ENCODE measurements at regions of chr11 and their contacts with region 1.

Region 1: DNA sequence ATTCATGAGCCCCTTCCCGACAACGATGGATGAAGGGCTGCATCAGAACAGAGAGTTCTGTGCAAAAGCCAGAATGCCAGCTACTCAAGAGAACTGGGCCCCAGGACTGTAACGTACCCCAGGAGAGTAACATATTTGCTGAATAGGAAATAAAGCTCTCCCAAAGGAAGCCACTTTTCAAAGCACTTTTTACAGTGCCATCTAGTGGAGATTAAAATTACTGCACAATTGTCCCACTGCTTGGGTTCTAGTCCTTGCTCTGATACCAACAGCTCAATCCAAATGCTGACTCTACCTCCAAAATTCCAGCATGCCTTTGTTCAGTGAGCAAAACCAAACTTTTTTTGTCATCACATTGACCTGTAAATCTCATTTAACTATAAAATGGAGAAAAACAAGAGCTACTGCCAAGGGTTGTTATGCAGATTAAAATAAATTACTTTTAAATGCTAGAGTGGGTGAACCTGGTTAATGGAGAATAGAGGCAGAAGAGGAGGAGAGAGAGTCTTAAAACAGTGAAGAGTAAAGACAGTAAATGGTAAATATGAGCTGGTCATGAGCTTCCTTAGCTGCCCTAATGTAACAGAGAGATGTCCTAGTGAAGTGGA is 87.6 kb upstream of the FSHB start:
- DNase-seq: peak; percentile 25
- ATAC-seq: peak; percentile 68
- H3K4me3 ChIP-seq: no peak overlapping the region
- H3K27ac ChIP-seq: no peak overlapping the region
- H3K4me1 ChIP-seq: no peaks in the 10 kb centered on the region
- H3K27me3 ChIP-seq: no peaks in the 10 kb centered on the region
- CTCF ChIP-seq: peak; percentile 66
- EP300 ChIP-seq: no peak
- POLR2A ChIP-seq: no peak
- RAD21 ChIP-seq: no peak

Region 2: DNA sequence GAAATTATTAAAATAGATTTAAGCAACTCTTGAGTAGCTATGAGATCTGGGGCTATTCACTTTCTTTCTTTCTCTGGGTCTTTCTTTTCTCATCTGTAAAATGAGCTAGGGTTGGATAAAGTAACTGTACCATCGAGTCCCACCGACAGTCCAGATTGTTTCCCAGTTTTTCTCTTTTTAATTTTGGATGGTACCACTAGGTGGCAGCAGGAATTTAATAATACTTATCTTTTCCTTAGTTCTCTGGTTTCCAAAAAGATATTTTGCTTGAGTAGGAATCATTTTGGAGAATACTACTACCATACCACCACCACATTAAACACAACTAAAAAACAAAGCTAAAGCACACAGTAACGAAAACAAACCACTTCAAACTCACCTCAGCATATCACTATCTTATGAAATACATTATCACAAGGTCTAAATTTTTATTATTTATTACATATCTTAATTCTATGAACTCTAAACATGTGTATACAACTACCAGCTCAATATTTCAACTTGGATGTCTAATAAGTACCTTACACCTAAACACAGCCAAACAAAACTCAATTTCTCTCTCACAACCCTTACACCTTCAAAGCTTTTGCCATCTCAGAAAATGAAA is 710.4 kb before region 1 on chr11:
- CTCF ChIA-PET with region 1: interaction called, 5 read pairs
- POLR2A ChIA-PET with region 1: no interaction called
- in situ Hi-C with region 1: no loop called
- intact Hi-C with region 1: loop called (anchors 5 kb)
- DNase-seq: peak; percentile 2
- ATAC-seq: no peak
- H3K4me3 ChIP-seq: no peak overlapping the region
- H3K27ac ChIP-seq: no peak overlapping the region
- H3K4me1 ChIP-seq: no peaks in the 10 kb centered on the region
- H3K27me3 ChIP-seq: no peaks in the 10 kb centered on the region
- CTCF ChIP-seq: peak; percentile 40
- EP300 ChIP-seq: no peak
- POLR2A ChIP-seq: no peak
- RAD21 ChIP-seq: no peak

Region 3: GRCh38 chr11:29448246-29448877 is 694.8 kb before region 1 on chr11:
- CTCF ChIA-PET with region 1: no interaction called
- POLR2A ChIA-PET with region 1: no interaction called
- in situ Hi-C with region 1: no loop called
- intact Hi-C with region 1: loop called (anchors 2 kb)
- DNase-seq: no peak
- ATAC-seq: no peak
- H3K4me3 ChIP-seq: no peak overlapping the region
- H3K27ac ChIP-seq: no peak overlapping the region
- H3K4me1 ChIP-seq: no peaks in the 10 kb centered on the region
- H3K27me3 ChIP-seq: no peaks in the 10 kb centered on the region
- CTCF ChIP-seq: peak; percentile 21; the same call in 1 of the 2 replicates
- EP300 ChIP-seq: no peak
- POLR2A ChIP-seq: no peak
- RAD21 ChIP-seq: no peak

Region 4: GRCh38 chr11:29482527-29482926 is 660.7 kb before region 1 on chr11:
- CTCF ChIA-PET with region 1: no interaction called
- POLR2A ChIA-PET with region 1: no interaction called
- in situ Hi-C with region 1: no loop called
- intact Hi-C with region 1: no loop called
- DNase-seq: no peak
- ATAC-seq: no peak
- H3K4me3 ChIP-seq: no peak overlapping the region
- H3K27ac ChIP-seq: no peak overlapping the region
- H3K4me1 ChIP-seq: no peaks in the 10 kb centered on the region
- H3K27me3 ChIP-seq: no peaks in the 10 kb centered on the region; a peak in 1 of 5 replicates
- CTCF ChIP-seq: no peak
- EP300 ChIP-seq: no peak
- POLR2A ChIP-seq: no peak
- RAD21 ChIP-seq: no peak

Region 5: DNA sequence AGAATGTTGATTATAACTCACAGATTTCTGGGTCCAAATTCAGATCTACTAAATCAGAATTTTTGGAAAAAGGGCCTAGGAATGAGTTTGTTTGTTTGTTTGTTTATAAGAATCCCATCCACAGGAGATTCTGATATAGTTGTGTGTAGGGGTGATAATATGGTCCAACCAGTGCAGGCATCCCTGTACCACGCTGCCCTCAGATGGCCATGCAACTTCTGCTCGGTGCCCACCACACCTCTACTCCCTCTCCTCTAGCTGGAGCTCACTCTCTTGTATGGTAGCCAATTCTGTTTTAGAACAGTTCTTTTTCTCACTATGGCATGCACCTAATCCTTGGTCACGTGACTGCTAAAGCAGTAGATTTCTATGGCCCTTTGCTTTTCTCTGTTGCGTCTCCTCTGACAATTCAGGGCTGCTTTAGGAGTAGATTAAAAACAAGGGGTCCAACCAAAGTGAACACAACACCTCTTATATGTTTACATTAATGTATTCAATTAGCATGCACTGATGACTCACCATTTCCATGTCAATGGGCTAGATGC is 23.1 kb before region 1 on chr11:
- CTCF ChIA-PET with region 1: no interaction called
- POLR2A ChIA-PET with region 1: no interaction called
- in situ Hi-C with region 1: no loop called
- intact Hi-C with region 1: no loop called
- DNase-seq: no peak
- ATAC-seq: no peak
- H3K4me3 ChIP-seq: no peak overlapping the region
- H3K27ac ChIP-seq: no peak overlapping the region
- H3K4me1 ChIP-seq: no peaks in the 10 kb centered on the region
- H3K27me3 ChIP-seq: no peaks in the 10 kb centered on the region
- CTCF ChIP-seq: no peak
- EP300 ChIP-seq: no peak
- POLR2A ChIP-seq: no peak
- RAD21 ChIP-seq: no peak

Region 6: GRCh38 chr11:30172883-30173311 is 29.7 kb after region 1 on chr11:
- CTCF ChIA-PET with region 1: no interaction called
- POLR2A ChIA-PET with region 1: no interaction called
- in situ Hi-C with region 1: no loop called
- intact Hi-C with region 1: no loop called
- DNase-seq: no peak
- ATAC-seq: no peak
- H3K4me3 ChIP-seq: no peak overlapping the region
- H3K27ac ChIP-seq: no peak overlapping the region
- H3K4me1 ChIP-seq: no peaks in the 10 kb centered on the region
- H3K27me3 ChIP-seq: no peaks in the 10 kb centered on the region; a peak in 1 of 5 replicates
- CTCF ChIP-seq: no peak
- EP300 ChIP-seq: no peak
- POLR2A ChIP-seq: no peak
- RAD21 ChIP-seq: no peak

Region 7: DNA sequence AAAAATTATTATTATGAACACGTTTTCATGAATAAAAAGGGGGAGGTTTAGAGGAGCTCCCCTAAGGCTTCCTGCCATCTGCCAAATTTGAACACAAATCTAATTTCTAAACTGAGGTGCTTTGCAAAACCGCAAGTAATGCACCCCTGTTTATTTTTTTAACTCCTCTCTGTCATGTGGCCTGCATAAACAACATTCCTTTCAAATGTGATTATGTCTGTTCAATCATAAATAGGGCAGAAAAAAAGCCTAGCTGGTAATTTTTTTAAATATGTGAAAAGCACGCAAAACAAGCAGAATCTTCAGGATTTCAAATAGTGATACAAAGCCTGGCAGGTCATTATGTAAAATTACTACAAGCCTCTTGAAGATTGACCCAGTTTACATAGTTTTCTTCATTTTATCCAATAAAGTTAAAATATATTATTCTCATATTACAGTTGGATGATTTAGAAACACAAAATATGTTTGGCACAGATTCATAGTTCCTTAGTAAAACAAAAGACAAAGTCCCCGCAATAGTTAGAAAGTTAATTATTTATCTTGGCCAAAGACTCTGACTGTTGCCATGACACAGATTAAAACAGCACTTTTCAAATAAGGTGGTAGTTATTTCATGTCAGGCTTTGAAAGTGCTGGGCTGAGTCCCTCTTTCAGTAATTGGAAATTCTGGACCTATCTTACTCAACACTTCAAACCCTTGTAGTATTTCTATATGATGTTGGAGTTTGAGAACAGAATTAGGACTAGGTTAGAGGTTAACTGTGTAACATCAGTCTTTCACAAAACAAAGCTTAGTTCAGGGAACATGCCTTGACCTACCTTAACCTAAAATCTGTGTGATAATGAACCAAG is 643.3 kb after region 1 on chr11:
- CTCF ChIA-PET with region 1: no interaction called
- POLR2A ChIA-PET with region 1: no interaction called
- in situ Hi-C with region 1: no loop called
- intact Hi-C with region 1: no loop called
- DNase-seq: peak; percentile 1
- ATAC-seq: no peak
- H3K4me3 ChIP-seq: no peak overlapping the region
- H3K27ac ChIP-seq: no peak overlapping the region
- H3K4me1 ChIP-seq: peaks cover 6% of the 10 kb centered on the region; the same call in 1 of the 2 replicates
- H3K27me3 ChIP-seq: no peaks in the 10 kb centered on the region
- CTCF ChIP-seq: no peak
- EP300 ChIP-seq: no peak
- POLR2A ChIP-seq: no peak
- RAD21 ChIP-seq: no peak

Measured in HepG2 (cell line).